ENCODE measurements at regions of chr16 and their contacts with region 1.

Region 1: DNA sequence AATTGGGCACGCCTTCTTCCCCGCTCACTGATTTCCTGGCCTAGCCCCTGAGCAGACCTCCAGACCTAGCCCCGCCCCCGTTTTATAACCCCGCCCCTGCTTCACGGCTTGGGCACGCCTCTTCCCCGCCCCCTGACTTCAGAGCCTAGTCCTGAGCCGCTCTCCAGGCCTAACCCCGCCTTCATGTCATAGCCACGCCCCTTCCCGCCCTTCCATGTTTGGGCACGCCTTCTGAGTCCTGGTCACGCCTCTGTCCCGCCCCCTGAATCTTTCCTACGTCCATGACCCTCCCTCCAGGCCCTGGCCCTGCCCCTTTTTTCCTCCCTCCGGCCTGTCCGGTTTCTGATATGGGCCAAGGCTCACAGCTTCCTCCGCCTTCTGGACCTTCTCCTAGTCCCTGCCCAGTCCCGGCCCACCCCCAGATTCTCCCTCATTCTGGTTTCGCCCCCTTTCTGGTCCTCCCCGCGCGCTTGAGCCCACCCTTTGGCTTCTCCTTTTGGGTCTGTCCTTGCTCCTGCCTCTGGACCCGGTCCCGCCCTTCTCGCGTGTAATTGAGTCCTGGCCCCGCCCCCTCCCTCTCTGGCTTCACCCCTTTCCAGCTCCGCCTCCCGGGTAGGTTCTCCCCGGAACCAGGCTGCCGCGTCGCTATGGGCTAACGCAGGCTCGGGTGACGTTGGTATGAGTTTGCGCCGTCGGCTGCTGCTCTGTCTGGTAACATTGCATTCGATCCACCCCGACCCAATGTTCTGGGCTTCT is 15.1 kb upstream of the EEF2K start:
- DNase-seq: peak; percentile 100
- ATAC-seq: peak; percentile 58
- H3K4me3 ChIP-seq: peak overlapping the region; percentile 53 to 78 (median 66)
- H3K4me3 Mint-ChIP-seq: peak overlapping the region; percentile 99
- H3K27ac ChIP-seq: peak overlapping the region; percentile 96 to 100
- H3K27ac Mint-ChIP-seq: peak overlapping the region; percentile 100
- H3K4me1 ChIP-seq: peaks cover 43 to 52% of the 10 kb centered on the region in 2 donors
- H3K4me1 Mint-ChIP-seq: peaks cover 59% of the 10 kb centered on the region
- H3K27me3 ChIP-seq: no peaks in the 10 kb centered on the region
- H3K27me3 Mint-ChIP-seq: peaks cover 3% of the 10 kb centered on the region
- CTCF ChIP-seq: no peak

Region 2: DNA sequence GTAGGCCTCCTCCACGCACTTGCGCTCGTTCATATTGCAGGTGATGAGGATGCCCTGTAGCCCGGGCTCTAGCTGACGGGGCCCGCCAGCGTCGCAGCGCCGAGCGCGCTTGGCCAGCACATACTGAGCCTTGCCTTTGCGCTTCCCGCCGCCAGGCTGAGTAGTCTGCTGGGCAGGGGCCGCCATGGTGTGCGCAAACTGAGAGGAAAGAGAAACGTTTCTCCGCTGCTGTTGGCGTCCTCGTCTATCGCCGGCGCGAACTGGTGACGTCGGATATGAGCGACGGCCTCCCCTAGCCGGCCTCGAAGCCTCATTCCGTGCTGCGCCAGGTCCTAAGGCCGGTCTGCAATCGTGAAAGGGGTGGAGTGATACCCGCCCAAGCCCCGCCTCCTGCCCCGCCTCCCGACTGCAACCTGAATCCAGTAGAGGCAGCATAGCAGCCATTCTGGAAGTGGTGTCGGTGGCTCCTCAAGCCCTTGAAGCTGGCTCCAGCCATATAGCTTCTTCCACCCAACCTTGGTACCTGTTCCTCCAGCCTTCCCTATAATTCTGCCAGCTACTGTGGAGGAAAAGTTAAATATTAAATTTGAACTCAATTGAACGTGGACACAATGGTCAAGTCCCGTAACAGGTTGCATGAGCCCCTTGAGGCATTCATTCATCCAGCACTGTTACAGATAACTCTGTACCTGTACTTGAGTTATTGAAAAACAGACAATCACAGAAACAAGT is 1449.2 kb before region 1 on chr16 and contains the start of gene THUMPD1:
- CTCF ChIA-PET with region 1: no interaction called
- POLR2A ChIA-PET with region 1: no interaction called
- intact Hi-C with region 1: loop called (anchors 2 kb)
- DNase-seq: peak; percentile 96
- ATAC-seq: peak; percentile 91
- H3K4me3 ChIP-seq: peak within 1 kb of the TSS; percentile 74 to 100 (median 90)
- H3K4me3 Mint-ChIP-seq: peak within 1 kb of the TSS; percentile 95
- H3K27ac ChIP-seq: peak within 1 kb of the TSS; percentile 90 to 97
- H3K27ac Mint-ChIP-seq: peak within 1 kb of the TSS; percentile 97
- H3K4me1 ChIP-seq: peaks cover 19 to 23% of the 10 kb centered on the region in 2 donors
- H3K4me1 Mint-ChIP-seq: peaks cover 22% of the 10 kb centered on the region
- H3K27me3 ChIP-seq: no peaks in the 10 kb centered on the region
- H3K27me3 Mint-ChIP-seq: no peaks in the 10 kb centered on the region
- CTCF ChIP-seq: no peak
- total RNA-seq, gene THUMPD1: 52.5 and 54.3 TPM in 2 replicates

Region 3: DNA sequence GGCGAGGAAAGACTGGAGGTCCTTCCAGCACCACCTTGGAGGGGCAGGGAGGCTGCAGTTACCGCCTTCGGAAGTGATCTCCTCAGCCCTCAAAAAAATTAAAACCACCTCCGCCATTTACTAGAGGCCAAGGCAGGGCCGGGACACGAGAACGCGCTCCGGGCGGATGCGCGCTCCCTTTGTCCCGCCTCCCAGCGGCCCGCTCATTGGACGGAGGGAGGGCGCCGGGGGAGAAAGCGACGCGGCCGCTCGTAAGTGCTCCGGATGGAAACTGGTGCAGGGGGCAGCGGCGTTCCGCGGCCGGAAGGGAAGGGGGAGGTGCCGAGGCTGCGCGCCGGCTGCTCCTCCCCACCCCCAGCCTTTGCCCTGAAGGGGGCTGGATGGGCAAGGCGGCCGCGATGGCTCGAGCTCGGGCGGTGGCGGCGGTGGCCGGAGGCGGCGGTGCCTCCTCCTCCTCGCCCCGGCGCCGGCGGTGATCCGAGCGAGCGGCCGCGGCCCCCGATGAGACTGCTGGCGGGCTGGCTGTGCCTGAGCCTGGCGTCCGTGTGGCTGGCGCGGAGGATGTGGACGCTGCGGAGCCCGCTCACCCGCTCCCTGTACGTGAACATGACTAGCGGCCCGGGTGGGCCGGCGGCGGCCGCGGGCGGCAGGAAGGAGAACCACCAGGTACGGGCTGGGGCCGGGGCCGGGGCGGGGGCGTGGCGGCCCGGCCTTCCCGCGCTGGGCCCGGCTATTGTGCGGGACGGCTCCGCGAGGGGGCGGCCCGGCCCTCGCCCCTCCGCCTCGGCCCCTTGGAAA is 591.5 kb before region 1 on chr16 and contains the start of gene METTL9:
- CTCF ChIA-PET with region 1: no interaction called
- POLR2A ChIA-PET with region 1: no interaction called
- intact Hi-C with region 1: loop called (anchors 2 kb)
- DNase-seq: peak; percentile 97
- ATAC-seq: peak; percentile 89
- H3K4me3 ChIP-seq: peak within 1 kb of the TSS; percentile 70 to 95 (median 82)
- H3K4me3 Mint-ChIP-seq: peak within 1 kb of the TSS; percentile 88
- H3K27ac ChIP-seq: peak within 1 kb of the TSS; percentile 83 to 91
- H3K27ac Mint-ChIP-seq: peak within 1 kb of the TSS; percentile 94
- H3K4me1 ChIP-seq: peaks cover 13 to 17% of the 10 kb centered on the region in 2 donors
- H3K4me1 Mint-ChIP-seq: peaks cover 35% of the 10 kb centered on the region
- H3K27me3 ChIP-seq: no peaks in the 10 kb centered on the region
- H3K27me3 Mint-ChIP-seq: no peaks in the 10 kb centered on the region
- CTCF ChIP-seq: no peak
- total RNA-seq, gene METTL9: 57.3 and 57.7 TPM in 2 replicates

Region 4: DNA sequence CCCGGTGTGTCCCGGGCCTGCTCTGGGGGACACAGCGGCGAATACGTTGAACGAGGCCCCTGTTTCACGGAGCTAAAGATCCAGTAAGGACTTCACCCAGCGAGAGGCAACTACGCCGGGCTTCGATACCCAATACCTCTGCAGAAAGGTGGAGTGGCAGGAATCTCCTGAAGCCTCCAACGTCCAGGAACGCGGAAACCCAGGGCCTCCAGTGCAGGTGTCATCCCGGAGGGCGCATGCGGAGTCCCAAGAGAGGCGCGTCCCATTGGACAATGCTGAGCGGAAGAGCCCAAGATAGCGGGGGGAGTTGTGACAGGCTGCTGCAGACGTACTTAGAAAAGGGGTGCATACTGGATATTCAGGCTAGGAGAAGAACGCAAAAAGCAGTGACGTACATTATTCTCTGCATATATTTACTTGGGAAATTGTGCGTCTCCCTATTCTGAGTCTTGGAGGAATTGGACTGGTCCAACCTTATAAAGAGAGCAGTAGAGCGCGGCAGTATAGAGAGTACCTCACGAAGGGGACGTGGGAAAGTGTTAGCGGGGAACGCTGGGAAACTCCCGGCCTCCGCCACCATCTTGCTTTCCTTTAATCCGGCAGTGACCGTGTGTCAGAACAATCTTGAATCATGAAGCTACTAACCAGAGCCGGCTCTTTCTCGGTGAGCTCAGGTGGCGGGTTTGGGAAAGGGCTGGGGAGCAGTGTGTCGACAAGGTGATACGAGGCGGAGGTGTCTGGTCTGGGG is 238.0 kb before region 1 on chr16 and contains the start of gene UQCRC2:
- CTCF ChIA-PET with region 1: interaction called, 13 read pairs
- POLR2A ChIA-PET with region 1: interaction called, 7 read pairs
- intact Hi-C with region 1: loop called (anchors 1 kb)
- DNase-seq: peak; percentile 96
- ATAC-seq: peak; percentile 91
- H3K4me3 ChIP-seq: peak within 1 kb of the TSS; percentile 74 to 100 (median 97)
- H3K4me3 Mint-ChIP-seq: peak within 1 kb of the TSS; percentile 98
- H3K27ac ChIP-seq: peak within 1 kb of the TSS; percentile 88 to 97
- H3K27ac Mint-ChIP-seq: peak within 1 kb of the TSS; percentile 97
- H3K4me1 ChIP-seq: peaks cover 34 to 45% of the 10 kb centered on the region in 2 donors
- H3K4me1 Mint-ChIP-seq: peaks cover 65% of the 10 kb centered on the region
- H3K27me3 ChIP-seq: no peaks in the 10 kb centered on the region
- H3K27me3 Mint-ChIP-seq: no peaks in the 10 kb centered on the region
- CTCF ChIP-seq: no peak
- total RNA-seq, gene UQCRC2: 150 and 155 TPM in 2 replicates

Region 5: DNA sequence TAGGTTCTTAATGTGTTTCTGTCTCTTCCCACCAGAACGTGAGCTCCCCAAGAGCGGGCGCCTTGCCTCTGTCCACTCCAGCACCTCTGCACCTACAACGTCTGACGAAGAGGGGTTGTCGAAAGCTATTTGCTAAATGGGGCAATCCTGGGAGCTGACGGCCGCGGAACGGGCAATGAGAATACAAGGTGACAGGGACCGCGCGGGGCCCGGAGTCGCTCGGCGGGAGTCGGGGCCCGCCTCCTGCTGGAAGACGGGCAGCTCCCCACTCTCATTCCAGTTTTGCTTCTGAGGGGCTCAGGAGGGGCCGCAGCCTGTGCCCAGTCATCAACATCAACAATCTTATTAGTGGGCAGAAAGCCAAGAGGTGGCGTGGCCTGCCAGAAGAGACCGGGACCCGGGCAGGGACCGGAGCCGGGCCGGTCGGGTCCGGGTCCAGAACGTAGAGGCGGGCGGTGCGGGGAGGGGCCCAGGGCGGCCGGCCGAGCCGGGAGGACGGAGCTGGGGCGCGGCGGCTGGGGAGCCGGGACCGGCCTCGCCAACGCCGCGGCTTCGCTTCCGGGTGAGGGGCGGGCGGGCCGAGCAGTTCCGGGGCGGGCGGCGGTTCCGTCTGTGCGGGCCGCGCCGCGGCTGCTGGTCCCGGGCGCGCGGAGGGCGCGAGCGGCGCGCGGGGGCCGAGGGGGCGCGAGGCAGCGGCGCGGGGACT is 183.3 kb before region 1 on chr16 and contains the start of gene MOSMO:
- CTCF ChIA-PET with region 1: interaction called, 97 read pairs
- POLR2A ChIA-PET with region 1: interaction called, 9 read pairs
- intact Hi-C with region 1: loop called (anchors 1 kb)
- DNase-seq: peak; percentile 79
- ATAC-seq: peak; percentile 89
- H3K4me3 ChIP-seq: peak within 1 kb of the TSS; percentile 55 to 97 (median 89)
- H3K4me3 Mint-ChIP-seq: peak within 1 kb of the TSS; percentile 93
- H3K27ac ChIP-seq: peak within 1 kb of the TSS; percentile 60 to 82
- H3K27ac Mint-ChIP-seq: peak within 1 kb of the TSS; percentile 88
- H3K4me1 ChIP-seq: peaks cover 17 to 22% of the 10 kb centered on the region in 2 donors
- H3K4me1 Mint-ChIP-seq: peaks cover 30% of the 10 kb centered on the region
- H3K27me3 ChIP-seq: no peaks in the 10 kb centered on the region
- H3K27me3 Mint-ChIP-seq: no peaks in the 10 kb centered on the region
- CTCF ChIP-seq: no peak
- total RNA-seq, gene MOSMO: 18.6 and 20.2 TPM in 2 replicates

Region 6: GRCh38 chr16:22063888-22064467 is 127.0 kb before region 1 on chr16:
- CTCF ChIA-PET with region 1: no interaction called
- POLR2A ChIA-PET with region 1: no interaction called
- intact Hi-C with region 1: no loop called
- DNase-seq: no peak
- ATAC-seq: no peak
- H3K4me3 ChIP-seq: no peak overlapping the region
- H3K4me3 Mint-ChIP-seq: no peak overlapping the region
- H3K27ac ChIP-seq: no peak overlapping the region
- H3K27ac Mint-ChIP-seq: no peak overlapping the region
- H3K4me1 ChIP-seq: no peaks in the 10 kb centered on the region
- H3K4me1 Mint-ChIP-seq: peaks cover 3% of the 10 kb centered on the region
- H3K27me3 ChIP-seq: no peaks in the 10 kb centered on the region
- H3K27me3 Mint-ChIP-seq: no peaks in the 10 kb centered on the region
- CTCF ChIP-seq: no peak

Region 7: DNA sequence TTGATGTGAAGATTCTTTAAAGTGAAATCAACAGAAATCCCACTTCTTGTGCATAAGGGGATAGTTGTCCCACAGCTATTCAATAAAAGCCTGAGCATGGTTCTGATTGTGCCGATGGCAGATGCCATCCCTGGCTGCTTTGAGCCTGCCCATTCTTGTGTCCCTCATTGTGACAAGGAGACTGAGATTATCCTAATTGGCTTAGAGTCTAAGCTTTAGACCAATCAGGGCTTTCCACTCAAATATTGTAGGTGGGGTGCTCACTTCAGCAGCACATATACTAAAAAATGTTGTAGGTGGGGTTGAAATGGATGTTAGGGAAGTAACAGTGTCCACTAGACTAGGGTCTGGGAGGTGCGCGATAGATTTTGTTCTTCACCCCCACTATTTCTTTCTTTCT is 47.6 kb before region 1 on chr16:
- CTCF ChIA-PET with region 1: no interaction called
- POLR2A ChIA-PET with region 1: no interaction called
- intact Hi-C with region 1: no loop called
- DNase-seq: no peak
- ATAC-seq: no peak
- H3K4me3 ChIP-seq: no peak overlapping the region
- H3K4me3 Mint-ChIP-seq: no peak overlapping the region
- H3K27ac ChIP-seq: no peak overlapping the region
- H3K27ac Mint-ChIP-seq: no peak overlapping the region
- H3K4me1 ChIP-seq: no peaks in the 10 kb centered on the region
- H3K4me1 Mint-ChIP-seq: no peaks in the 10 kb centered on the region
- H3K27me3 ChIP-seq: peaks cover 0 to 9% (median 0%) of the 10 kb centered on the region in 4 experiments
- H3K27me3 Mint-ChIP-seq: peaks cover 20% of the 10 kb centered on the region
- CTCF ChIP-seq: no peak

Region 8: DNA sequence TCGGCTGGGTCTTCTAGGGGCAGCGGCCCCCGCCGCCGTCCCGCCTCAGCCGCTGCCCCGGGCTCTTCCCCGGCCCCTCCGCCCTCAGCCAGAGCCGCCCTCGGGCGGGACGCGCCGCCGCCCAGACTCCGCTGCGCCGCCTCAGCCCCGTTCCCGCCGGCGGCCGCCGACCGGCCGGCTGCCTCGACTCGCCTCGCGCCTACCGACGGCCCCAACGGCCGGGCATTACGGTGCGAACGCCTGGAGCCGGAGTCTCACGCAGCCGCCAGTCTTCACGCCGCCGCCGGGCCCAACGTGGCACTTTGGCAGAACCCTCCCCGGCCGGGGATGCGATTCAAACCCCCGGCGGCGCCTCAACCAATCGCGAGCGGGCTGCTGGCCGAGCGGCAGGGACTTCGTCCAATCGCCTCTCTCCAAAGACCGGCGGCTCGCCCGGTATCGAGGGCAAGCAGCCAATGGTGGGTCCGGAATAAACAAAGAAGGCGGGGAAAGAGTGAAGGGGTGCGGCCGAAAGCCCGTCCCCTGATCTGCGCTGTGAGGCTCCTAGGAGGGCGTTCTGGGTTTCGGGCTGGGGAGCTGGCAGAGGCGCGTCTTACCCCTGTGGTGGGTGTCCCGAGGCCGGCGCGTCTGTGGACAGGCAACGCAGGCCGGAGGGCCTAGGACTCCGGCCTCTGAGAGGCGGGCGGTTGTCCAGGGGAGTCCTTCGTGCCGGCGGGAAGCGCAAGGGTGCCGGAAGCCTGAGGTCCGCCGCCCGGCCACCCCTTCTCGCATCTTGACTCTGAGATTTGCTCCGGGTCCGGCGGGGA is 183.6 kb after region 1 on chr16 and contains the start of gene CDR2:
- CTCF ChIA-PET with region 1: no interaction called
- POLR2A ChIA-PET with region 1: no interaction called
- intact Hi-C with region 1: loop called (anchors 1 kb)
- DNase-seq: peak; percentile 97
- ATAC-seq: peak; percentile 96
- H3K4me3 ChIP-seq: peak within 1 kb of the TSS; percentile 8 to 92 (median 80)
- H3K4me3 Mint-ChIP-seq: peak within 1 kb of the TSS; percentile 98
- H3K27ac ChIP-seq: peak within 1 kb of the TSS in 1 of 2 donors; percentile 54
- H3K27ac Mint-ChIP-seq: peak within 1 kb of the TSS; percentile 84
- H3K4me1 ChIP-seq: peaks cover 14 to 15% of the 10 kb centered on the region in 2 donors
- H3K4me1 Mint-ChIP-seq: peaks cover 20% of the 10 kb centered on the region
- H3K27me3 ChIP-seq: no peaks in the 10 kb centered on the region
- H3K27me3 Mint-ChIP-seq: no peaks in the 10 kb centered on the region
- CTCF ChIP-seq: no peak
- total RNA-seq, gene CDR2: 10.5 and 11.3 TPM in 2 replicates

Measured in B cell (primary cell).